ENCODE measurements at regions of chr4 and their contacts with region 1.

Region 1: DNA sequence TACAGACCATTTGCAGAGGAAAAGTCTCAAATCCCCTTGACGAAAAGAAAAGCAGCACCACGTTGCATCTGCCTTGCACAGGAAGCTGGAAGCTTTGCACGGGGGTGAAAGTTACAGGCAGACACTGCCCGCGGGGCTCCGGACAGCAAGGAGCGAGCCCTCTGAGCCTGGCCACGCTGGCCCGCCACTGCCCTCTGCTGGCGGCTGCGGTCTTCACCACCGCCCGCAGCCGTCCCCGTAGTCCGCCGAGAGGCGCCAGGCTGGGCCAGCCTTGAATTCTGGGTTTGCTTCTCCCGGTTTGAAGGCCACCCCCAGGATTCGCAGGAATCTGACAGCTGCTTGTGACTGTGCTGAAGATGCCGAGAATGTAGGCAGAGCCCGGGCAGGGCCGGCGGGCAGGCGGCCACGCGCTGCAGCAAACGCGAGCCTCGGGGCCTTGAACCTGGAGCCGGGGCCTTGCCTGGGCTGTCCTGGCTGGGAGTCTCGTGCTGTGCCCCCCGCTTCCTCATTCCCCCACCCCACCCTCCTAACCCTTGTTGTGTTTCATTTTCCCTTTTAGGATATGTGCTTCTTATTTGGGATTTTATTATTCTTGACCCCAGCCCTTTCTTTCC is 49.2 kb downstream of the ENPP6 start:
- DNase-seq: peak; percentile 88
- ATAC-seq: peak; percentile 78
- H3K4me3 Mint-ChIP-seq: peak overlapping the region; percentile 56
- H3K27ac Mint-ChIP-seq: peak overlapping the region; percentile 37; the same call in 1 of the 2 replicates
- H3K4me1 Mint-ChIP-seq: peaks cover 64% of the 10 kb centered on the region
- H3K27me3 Mint-ChIP-seq: peaks cover 8% of the 10 kb centered on the region
- CTCF ChIP-seq: peak; percentile 91

Region 2: GRCh38 chr4:183840311-183840710 is 328.2 kb before region 1 on chr4:
- CTCF ChIA-PET with region 1: interaction called, 26 read pairs
- POLR2A ChIA-PET with region 1: interaction called, 3 read pairs
- DNase-seq: peak; percentile 84
- ATAC-seq: peak; percentile 71
- H3K4me3 Mint-ChIP-seq: no peak overlapping the region
- H3K27ac Mint-ChIP-seq: no peak overlapping the region
- H3K4me1 Mint-ChIP-seq: peaks cover 13% of the 10 kb centered on the region
- H3K27me3 Mint-ChIP-seq: no peaks in the 10 kb centered on the region
- CTCF ChIP-seq: peak; percentile 83

Region 3: DNA sequence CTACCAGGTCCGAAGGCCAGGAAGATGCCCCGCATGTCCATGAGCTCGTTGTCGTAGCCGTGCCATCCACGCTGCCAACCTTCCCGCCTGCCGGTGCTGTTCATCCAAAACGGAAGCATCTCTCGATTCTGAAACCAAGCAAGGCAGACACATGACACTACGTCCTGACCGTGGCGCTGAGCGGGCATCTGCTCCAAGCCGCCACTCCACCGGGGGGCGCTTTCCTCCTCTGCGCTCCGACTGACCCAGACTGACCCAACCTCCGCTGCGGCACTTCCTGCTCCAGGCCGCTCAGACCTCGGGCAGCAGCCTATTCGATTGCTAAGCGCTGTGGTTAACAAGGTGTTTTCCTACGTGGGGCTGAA is 71.3 kb before region 1 on chr4:
- CTCF ChIA-PET with region 1: interaction called, 11 read pairs
- POLR2A ChIA-PET with region 1: no interaction called
- DNase-seq: peak; percentile 85
- ATAC-seq: peak; percentile 99
- H3K4me3 Mint-ChIP-seq: peak overlapping the region; percentile 43; the same call in 1 of the 2 replicates
- H3K27ac Mint-ChIP-seq: no peak overlapping the region
- H3K4me1 Mint-ChIP-seq: peaks cover 11% of the 10 kb centered on the region
- H3K27me3 Mint-ChIP-seq: no peaks in the 10 kb centered on the region; the same call in 1 of the 2 replicates
- CTCF ChIP-seq: 0 out of 2 replicates have a peak, but pooled peaks have one; percentile 25